PC-3 (cell line): ENCODE measurements at regions of chr2 and their contacts with region 1.

Region 1: DNA sequence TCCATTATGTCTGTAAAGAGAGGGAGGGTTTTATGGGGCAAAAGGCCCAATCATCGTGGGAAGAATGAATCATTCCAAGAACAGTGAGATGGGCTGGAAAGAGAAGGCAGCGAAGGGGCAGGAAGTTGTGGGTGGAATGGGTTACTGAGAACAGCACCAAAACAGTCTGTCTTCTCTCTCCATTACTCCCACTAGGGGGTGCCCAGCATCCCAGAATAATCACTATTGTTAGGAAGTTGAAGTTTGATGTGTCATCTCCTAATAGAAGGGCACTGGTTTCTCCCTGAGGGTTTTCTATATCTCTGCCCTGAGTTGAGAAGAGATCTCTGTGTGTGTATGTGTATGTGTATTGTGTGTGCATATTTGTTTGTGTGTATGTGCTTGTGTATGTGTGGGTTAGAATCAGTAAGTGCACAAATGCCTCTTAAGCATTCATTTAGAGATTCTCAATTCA is 76.6 kb upstream of the MAP4K3 start:
- DNase-seq: peak; percentile 97
- ATAC-seq: peak; percentile 93
- H3K4me3 ChIP-seq: no peak overlapping the region
- H3K27ac ChIP-seq: peak overlapping the region; percentile 85
- H3K4me1 ChIP-seq: peaks cover 34% of the 10 kb centered on the region
- H3K27me3 ChIP-seq: no peaks in the 10 kb centered on the region
- CTCF ChIP-seq: peak; percentile 88

Region 2: DNA sequence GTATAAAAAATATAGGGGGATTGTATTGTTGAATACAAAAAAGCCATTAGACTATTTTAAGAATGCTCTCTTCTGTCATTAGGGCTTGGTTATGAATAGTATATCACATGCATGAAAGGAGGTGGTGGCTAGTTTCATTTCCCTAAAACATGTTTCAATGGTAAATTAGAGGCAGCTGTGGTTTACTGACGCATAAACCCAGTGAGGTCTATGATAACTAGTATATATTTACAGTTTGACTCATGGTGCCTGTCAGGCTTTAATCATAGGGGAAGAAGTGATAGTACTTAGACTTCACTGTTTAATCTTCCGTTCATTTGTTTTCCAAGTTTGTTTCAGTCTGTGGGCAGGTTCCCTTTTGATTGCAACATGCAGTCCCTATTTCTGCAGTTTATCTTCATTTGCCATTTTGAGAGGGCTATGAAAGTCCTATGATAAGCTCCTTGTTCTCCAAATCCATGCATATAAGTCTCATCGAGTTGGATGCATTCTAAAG is 21.5 kb before region 1 on chr2:
- CTCF ChIA-PET with region 1: no interaction called
- POLR2A ChIA-PET with region 1: no interaction called
- intact Hi-C with region 1: loop called (anchors 2 kb)
- DNase-seq: peak; percentile 97
- ATAC-seq: peak; percentile 76
- H3K4me3 ChIP-seq: peak overlapping the region; percentile 26; the same call in 1 of the 2 replicates
- H3K27ac ChIP-seq: peak overlapping the region; percentile 95
- H3K4me1 ChIP-seq: peaks cover 83% of the 10 kb centered on the region
- H3K27me3 ChIP-seq: no peaks in the 10 kb centered on the region
- CTCF ChIP-seq: no peak

Region 3: DNA sequence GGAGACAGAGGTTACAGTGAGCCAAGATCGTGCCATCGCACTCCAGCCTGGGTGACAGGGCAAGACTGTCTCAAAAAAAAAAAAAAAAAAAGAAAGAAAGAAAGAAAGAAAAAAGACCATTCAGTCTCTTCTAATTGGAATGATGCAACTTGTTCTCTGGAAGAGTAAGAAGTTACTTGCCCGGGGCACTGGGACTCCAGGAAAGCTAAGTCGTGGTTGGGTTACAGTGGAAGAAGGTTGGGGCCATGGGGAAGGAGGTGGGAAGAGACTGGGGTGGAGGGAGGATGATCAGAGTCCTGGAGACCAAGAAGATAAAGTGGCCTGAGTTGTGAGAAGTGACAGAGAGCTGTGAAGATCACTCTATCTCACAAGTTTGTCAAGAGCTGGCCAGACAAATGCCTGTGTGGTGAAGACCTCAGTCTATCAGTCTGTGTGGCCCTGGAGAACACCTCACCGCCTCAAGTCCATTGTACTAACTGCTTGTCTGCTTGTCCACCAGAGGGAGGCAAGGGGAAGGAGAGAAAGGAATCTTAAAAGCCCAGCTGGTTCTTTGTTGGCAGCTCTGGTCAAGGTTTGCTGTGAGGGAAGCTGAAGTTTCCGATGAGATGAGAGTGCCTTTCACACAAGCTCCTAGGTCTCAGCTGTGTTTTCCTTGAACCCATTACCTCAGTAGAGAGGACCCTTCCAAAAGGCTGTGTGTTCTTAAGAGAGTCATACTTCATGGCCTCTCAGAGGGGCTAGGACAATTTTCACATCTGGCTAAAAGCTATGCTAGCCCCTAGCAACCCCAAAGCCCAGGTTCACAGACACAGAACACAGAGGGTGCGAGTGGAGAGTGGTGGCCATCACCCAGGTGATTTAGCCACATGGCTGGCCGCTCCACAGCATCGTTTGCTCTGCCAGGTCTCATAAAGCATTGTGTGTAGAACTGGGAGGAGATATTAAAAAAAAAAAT is 80.0 kb after region 1 on chr2:
- CTCF ChIA-PET with region 1: no interaction called
- POLR2A ChIA-PET with region 1: no interaction called
- intact Hi-C with region 1: loop called (anchors 1 kb)
- DNase-seq: peak; percentile 79
- ATAC-seq: peak; percentile 97
- H3K4me3 ChIP-seq: no peak overlapping the region
- H3K27ac ChIP-seq: no peak overlapping the region
- H3K4me1 ChIP-seq: no peaks in the 10 kb centered on the region
- H3K27me3 ChIP-seq: no peaks in the 10 kb centered on the region
- CTCF ChIP-seq: peak; percentile 85

Region 4: GRCh38 chr2:39642051-39642742 is 128.5 kb after region 1 on chr2:
- CTCF ChIA-PET with region 1: no interaction called
- POLR2A ChIA-PET with region 1: no interaction called
- intact Hi-C with region 1: loop called (anchors 5 kb)
- DNase-seq: peak; percentile 95
- ATAC-seq: peak; percentile 92
- H3K4me3 ChIP-seq: peak overlapping the region; percentile 7; the same call in 1 of the 2 replicates
- H3K27ac ChIP-seq: peak overlapping the region; percentile 72
- H3K4me1 ChIP-seq: peaks cover 59% of the 10 kb centered on the region
- H3K27me3 ChIP-seq: no peaks in the 10 kb centered on the region
- CTCF ChIP-seq: no peak

Region 5: DNA sequence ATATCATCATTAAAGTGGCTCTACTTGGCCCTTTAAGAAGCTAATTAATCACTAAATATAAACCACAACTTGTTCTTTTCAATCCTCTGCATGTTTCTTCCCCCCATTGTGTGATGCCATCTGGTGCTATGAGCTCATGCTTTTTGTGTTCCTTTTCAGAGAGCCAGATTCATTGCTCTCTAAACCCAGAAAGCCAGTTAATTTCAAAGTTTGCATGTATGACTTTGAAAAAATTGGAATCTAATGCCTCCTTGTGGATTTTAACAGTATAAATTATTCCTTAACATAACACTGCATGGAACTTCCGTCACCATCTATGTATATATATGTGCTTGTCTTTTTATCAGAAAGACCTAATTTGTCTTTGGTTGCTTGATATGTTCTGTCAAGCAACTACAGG is 183.2 kb after region 1 on chr2:
- CTCF ChIA-PET with region 1: no interaction called
- POLR2A ChIA-PET with region 1: no interaction called
- intact Hi-C with region 1: loop called (anchors 1 kb)
- DNase-seq: peak; percentile 65
- ATAC-seq: peak; percentile 88
- H3K4me3 ChIP-seq: no peak overlapping the region
- H3K27ac ChIP-seq: no peak overlapping the region
- H3K4me1 ChIP-seq: no peaks in the 10 kb centered on the region
- H3K27me3 ChIP-seq: no peaks in the 10 kb centered on the region
- CTCF ChIP-seq: peak; percentile 79

Region 6: GRCh38 chr2:39728941-39729351 is 215.3 kb after region 1 on chr2:
- CTCF ChIA-PET with region 1: no interaction called
- POLR2A ChIA-PET with region 1: no interaction called
- intact Hi-C with region 1: loop called (anchors 10 kb)
- DNase-seq: peak; percentile 57
- ATAC-seq: no peak
- H3K4me3 ChIP-seq: no peak overlapping the region
- H3K27ac ChIP-seq: no peak overlapping the region
- H3K4me1 ChIP-seq: peaks cover 21% of the 10 kb centered on the region
- H3K27me3 ChIP-seq: no peaks in the 10 kb centered on the region
- CTCF ChIP-seq: peak; percentile 94